ENCODE measurements at regions of chr5 and their contacts with region 1.

Region 1: GRCh38 chr5:5293029-5293428 is 129.4 kb upstream of the ICE1 start:
- DNase-seq: no peak
- ATAC-seq: peak; percentile 87
- H3K4me3 Mint-ChIP-seq: no peak overlapping the region
- H3K27ac Mint-ChIP-seq: no peak overlapping the region
- H3K4me1 Mint-ChIP-seq: peaks cover 25% of the 10 kb centered on the region
- H3K27me3 Mint-ChIP-seq: no peaks in the 10 kb centered on the region
- CTCF ChIP-seq: no peak

Region 2: DNA sequence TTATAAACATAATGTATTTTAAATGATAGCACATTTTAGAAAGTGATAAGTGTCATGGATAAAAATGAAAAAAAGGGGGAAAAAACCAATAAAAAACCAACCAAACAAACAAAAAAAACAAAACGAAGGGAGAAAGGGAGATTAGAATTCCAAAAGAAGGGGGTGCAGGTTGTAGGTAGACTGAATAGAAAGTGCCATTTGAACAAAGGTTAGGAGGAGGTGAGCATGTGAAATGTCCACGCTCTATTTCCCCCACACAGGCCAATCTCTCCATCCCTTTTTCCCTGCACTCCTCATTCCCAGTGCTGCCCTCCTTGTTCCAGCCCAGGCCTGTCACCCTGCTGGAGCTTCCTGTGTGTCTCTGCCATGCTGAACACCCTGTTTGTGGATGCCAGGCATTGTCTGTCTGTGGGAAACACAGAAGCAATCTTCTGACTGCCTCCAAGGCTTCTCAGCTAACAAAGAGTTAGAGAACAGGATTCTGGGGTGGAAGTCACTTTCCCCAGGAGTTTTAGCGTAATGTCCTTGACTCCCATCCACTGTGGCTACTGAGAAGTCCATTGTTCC is 14.1 kb before region 1 on chr5:
- CTCF ChIA-PET with region 1: interaction called, 12 read pairs
- POLR2A ChIA-PET with region 1: no interaction called
- DNase-seq: no peak
- ATAC-seq: peak; percentile 67
- H3K4me3 Mint-ChIP-seq: no peak overlapping the region
- H3K27ac Mint-ChIP-seq: no peak overlapping the region; the same call in 1 of the 2 replicates
- H3K4me1 Mint-ChIP-seq: peaks cover 23% of the 10 kb centered on the region
- H3K27me3 Mint-ChIP-seq: no peaks in the 10 kb centered on the region
- CTCF ChIP-seq: no peak

Region 3: DNA sequence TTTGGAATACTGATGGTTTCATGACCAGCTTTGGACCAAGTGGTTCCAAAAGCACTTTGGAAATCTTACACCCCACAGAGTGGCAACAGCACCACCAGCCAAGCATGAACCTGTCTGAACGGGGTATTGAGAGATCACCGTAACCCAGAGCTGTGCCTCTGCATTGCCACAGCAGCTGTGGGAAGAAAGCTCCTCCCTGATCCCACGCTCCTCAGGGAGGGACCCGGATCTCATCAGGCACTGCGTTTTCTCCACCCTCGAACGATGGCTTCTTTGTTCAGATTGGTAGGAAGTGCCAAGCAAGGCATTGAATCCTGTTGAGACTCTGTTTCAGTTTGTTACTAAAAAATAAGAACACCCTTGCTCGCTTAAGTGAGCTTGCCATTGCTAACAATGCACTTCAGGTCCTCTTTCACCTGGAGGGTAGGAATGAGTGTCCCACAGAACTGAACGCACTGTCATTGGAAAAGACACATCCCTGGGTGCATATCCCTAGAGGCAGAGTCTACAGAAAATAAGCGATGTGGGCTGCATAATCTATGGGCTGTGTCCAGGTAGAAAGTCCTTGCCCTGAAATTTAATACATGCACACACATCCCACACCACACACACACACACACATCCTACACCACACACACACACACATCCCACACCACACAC is 11.5 kb after region 1 on chr5:
- CTCF ChIA-PET with region 1: interaction called, 15 read pairs
- POLR2A ChIA-PET with region 1: no interaction called
- DNase-seq: no peak
- ATAC-seq: peak; percentile 24
- H3K4me3 Mint-ChIP-seq: no peak overlapping the region
- H3K27ac Mint-ChIP-seq: no peak overlapping the region
- H3K4me1 Mint-ChIP-seq: peaks cover 19% of the 10 kb centered on the region
- H3K27me3 Mint-ChIP-seq: no peaks in the 10 kb centered on the region
- CTCF ChIP-seq: no peak

Region 4: GRCh38 chr5:5313101-5313635 is 20.1 kb after region 1 on chr5:
- CTCF ChIA-PET with region 1: interaction called, 15 read pairs
- POLR2A ChIA-PET with region 1: no interaction called
- DNase-seq: no peak
- ATAC-seq: no peak
- H3K4me3 Mint-ChIP-seq: no peak overlapping the region
- H3K27ac Mint-ChIP-seq: peak overlapping the region; percentile 87
- H3K4me1 Mint-ChIP-seq: peaks cover 48% of the 10 kb centered on the region
- H3K27me3 Mint-ChIP-seq: no peaks in the 10 kb centered on the region
- CTCF ChIP-seq: no peak

Region 5: GRCh38 chr5:5421961-5422818 is 129.2 kb after region 1 on chr5 and contains the start of gene ICE1:
- CTCF ChIA-PET with region 1: interaction called, 19 read pairs
- POLR2A ChIA-PET with region 1: no interaction called
- DNase-seq: peak; percentile 97
- ATAC-seq: peak; percentile 95
- H3K4me3 Mint-ChIP-seq: peak within 1 kb of the TSS; percentile 89
- H3K27ac Mint-ChIP-seq: peak within 1 kb of the TSS; percentile 96
- H3K4me1 Mint-ChIP-seq: peaks cover 38% of the 10 kb centered on the region
- H3K27me3 Mint-ChIP-seq: no peaks in the 10 kb centered on the region; the same call in 1 of the 2 replicates
- CTCF ChIP-seq: no peak
- total RNA-seq, gene ICE1: 40.7 to 48.9 TPM (median 45.3 TPM) in 3 replicates

Region 6: GRCh38 chr5:5658226-5658625 is 365.2 kb after region 1 on chr5:
- CTCF ChIA-PET with region 1: no interaction called
- POLR2A ChIA-PET with region 1: no interaction called
- DNase-seq: no peak
- ATAC-seq: no peak
- H3K4me3 Mint-ChIP-seq: no peak overlapping the region
- H3K27ac Mint-ChIP-seq: no peak overlapping the region
- H3K4me1 Mint-ChIP-seq: peaks cover 6% of the 10 kb centered on the region
- H3K27me3 Mint-ChIP-seq: no peaks in the 10 kb centered on the region
- CTCF ChIP-seq: no peak

Measured in WTC11 (cell line).